ENCODE measurements at regions of chr10 and their contacts with region 1.

Region 1: DNA sequence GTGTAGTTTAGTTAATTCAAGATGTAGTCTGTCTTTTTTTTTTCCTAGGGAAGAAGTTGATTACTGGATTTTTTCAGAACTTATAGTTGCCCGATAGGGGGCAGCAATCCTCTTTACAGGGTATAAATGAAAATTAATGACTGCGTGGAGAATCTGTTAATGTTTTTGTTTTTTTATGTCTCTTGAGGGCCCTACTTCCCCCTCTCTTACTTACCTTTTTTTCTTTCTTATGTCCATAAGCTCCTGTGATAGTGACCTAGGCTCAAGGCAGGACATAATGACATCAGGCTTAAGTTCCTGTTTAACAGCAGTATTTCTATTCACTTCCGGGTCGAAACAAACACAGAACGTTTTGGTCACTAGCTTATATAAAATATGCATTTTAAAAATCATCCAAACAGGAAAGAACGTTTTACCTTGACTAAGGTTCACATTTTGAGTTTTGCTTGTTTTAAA is 18.8 kb downstream of the CDC123 start:
- DNase-seq: peak; percentile 83
- ATAC-seq: peak; percentile 24
- H3K4me3 ChIP-seq: peak overlapping the region in 4 of 5 experiments; percentile 9 to 42 (median 34)
- H3K4me3 Mint-ChIP-seq: peak overlapping the region; percentile 80
- H3K27ac ChIP-seq: peak overlapping the region; percentile 53 to 80
- H3K27ac Mint-ChIP-seq: peak overlapping the region; percentile 92
- H3K4me1 ChIP-seq: peaks cover 10 to 12% of the 10 kb centered on the region in 2 donors
- H3K4me1 Mint-ChIP-seq: peaks cover 14% of the 10 kb centered on the region
- H3K27me3 ChIP-seq: no peaks in the 10 kb centered on the region
- H3K27me3 Mint-ChIP-seq: no peaks in the 10 kb centered on the region
- CTCF ChIP-seq: peak; percentile 90

Region 2: DNA sequence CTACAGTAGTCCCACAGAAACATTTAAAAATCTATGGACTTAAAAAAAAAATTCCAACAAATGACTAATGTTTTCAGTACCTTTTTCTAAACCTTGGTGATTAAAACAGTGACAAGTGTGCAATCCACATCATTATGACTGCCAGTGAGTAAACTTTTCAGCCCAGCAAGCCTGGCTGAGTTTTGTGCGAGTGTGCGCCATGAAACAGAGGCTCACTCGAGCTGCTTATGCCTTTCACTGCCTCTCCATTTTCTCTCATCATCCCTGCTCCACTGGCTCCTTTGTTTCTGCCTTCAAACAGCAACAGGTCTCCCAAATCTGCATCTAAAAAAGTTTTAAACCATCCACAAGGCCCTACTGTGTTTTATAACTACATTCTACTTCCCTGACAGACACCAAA is 709.2 kb before region 1 on chr10:
- CTCF ChIA-PET with region 1: no interaction called
- POLR2A ChIA-PET with region 1: no interaction called
- intact Hi-C with region 1: no loop called
- DNase-seq: no peak
- ATAC-seq: no peak
- H3K4me3 ChIP-seq: no peak overlapping the region
- H3K4me3 Mint-ChIP-seq: no peak overlapping the region
- H3K27ac ChIP-seq: no peak overlapping the region
- H3K27ac Mint-ChIP-seq: peak overlapping the region; percentile 28
- H3K4me1 ChIP-seq: no peaks in the 10 kb centered on the region
- H3K4me1 Mint-ChIP-seq: peaks cover 21% of the 10 kb centered on the region
- H3K27me3 ChIP-seq: no peaks in the 10 kb centered on the region
- H3K27me3 Mint-ChIP-seq: no peaks in the 10 kb centered on the region
- CTCF ChIP-seq: no peak

Region 3: GRCh38 chr10:12195603-12196506 is 18.9 kb before region 1 on chr10 and contains the starts of genes CDC123 and NUDT5:
- CTCF ChIA-PET with region 1: interaction called, 24 read pairs
- POLR2A ChIA-PET with region 1: interaction called, 4 read pairs
- intact Hi-C with region 1: loop called (anchors 1 kb)
- DNase-seq: peak; percentile 93
- ATAC-seq: peak; percentile 90
- H3K4me3 ChIP-seq: peak within 1 kb of the TSS; percentile 87 to 97 (median 95)
- H3K4me3 Mint-ChIP-seq: peak within 1 kb of the TSS; percentile 93
- H3K27ac ChIP-seq: peak within 1 kb of the TSS; percentile 91 to 94
- H3K27ac Mint-ChIP-seq: peak within 1 kb of the TSS; percentile 99
- H3K4me1 ChIP-seq: peaks cover 18 to 24% of the 10 kb centered on the region in 2 donors
- H3K4me1 Mint-ChIP-seq: peaks cover 42% of the 10 kb centered on the region
- H3K27me3 ChIP-seq: no peaks in the 10 kb centered on the region
- H3K27me3 Mint-ChIP-seq: no peaks in the 10 kb centered on the region
- CTCF ChIP-seq: no peak
- total RNA-seq, gene CDC123: 56.0 and 62.0 TPM in 2 replicates
- total RNA-seq, gene NUDT5: 39.1 and 39.9 TPM in 2 replicates

Region 4: GRCh38 chr10:12228851-12229250 is 14.1 kb after region 1 on chr10:
- CTCF ChIA-PET with region 1: interaction called, 27 read pairs
- POLR2A ChIA-PET with region 1: no interaction called
- intact Hi-C with region 1: no loop called
- DNase-seq: no peak
- ATAC-seq: no peak
- H3K4me3 ChIP-seq: no peak overlapping the region
- H3K4me3 Mint-ChIP-seq: no peak overlapping the region
- H3K27ac ChIP-seq: no peak overlapping the region
- H3K27ac Mint-ChIP-seq: no peak overlapping the region
- H3K4me1 ChIP-seq: no peaks in the 10 kb centered on the region
- H3K4me1 Mint-ChIP-seq: no peaks in the 10 kb centered on the region
- H3K27me3 ChIP-seq: no peaks in the 10 kb centered on the region
- H3K27me3 Mint-ChIP-seq: no peaks in the 10 kb centered on the region
- CTCF ChIP-seq: no peak

Region 5: GRCh38 chr10:12241810-12242529 is 27.2 kb after region 1 on chr10:
- CTCF ChIA-PET with region 1: interaction called, 25 read pairs
- POLR2A ChIA-PET with region 1: no interaction called
- intact Hi-C with region 1: loop called (anchors 2 kb)
- DNase-seq: peak; percentile 71
- ATAC-seq: no peak
- H3K4me3 ChIP-seq: no peak overlapping the region
- H3K4me3 Mint-ChIP-seq: peak overlapping the region; percentile 77
- H3K27ac ChIP-seq: peak overlapping the region; percentile 95
- H3K27ac Mint-ChIP-seq: peak overlapping the region; percentile 99
- H3K4me1 ChIP-seq: peaks cover 58 to 62% of the 10 kb centered on the region in 2 donors
- H3K4me1 Mint-ChIP-seq: peaks cover 60% of the 10 kb centered on the region
- H3K27me3 ChIP-seq: no peaks in the 10 kb centered on the region
- H3K27me3 Mint-ChIP-seq: no peaks in the 10 kb centered on the region
- CTCF ChIP-seq: no peak

Region 6: GRCh38 chr10:12264204-12264940 is 49.6 kb after region 1 on chr10:
- CTCF ChIA-PET with region 1: interaction called, 11 read pairs
- POLR2A ChIA-PET with region 1: no interaction called
- intact Hi-C with region 1: no loop called
- DNase-seq: peak; percentile 99
- ATAC-seq: peak; percentile 89
- H3K4me3 ChIP-seq: peak overlapping the region in 4 of 5 experiments; percentile 18 to 34 (median 22)
- H3K4me3 Mint-ChIP-seq: peak overlapping the region; percentile 79
- H3K27ac ChIP-seq: peak overlapping the region; percentile 86 to 100
- H3K27ac Mint-ChIP-seq: peak overlapping the region; percentile 99
- H3K4me1 ChIP-seq: peaks cover 51 to 62% of the 10 kb centered on the region in 2 donors
- H3K4me1 Mint-ChIP-seq: peaks cover 50% of the 10 kb centered on the region
- H3K27me3 ChIP-seq: no peaks in the 10 kb centered on the region
- H3K27me3 Mint-ChIP-seq: no peaks in the 10 kb centered on the region
- CTCF ChIP-seq: peak; percentile 56

Region 7: GRCh38 chr10:12484941-12485805 is 270.4 kb after region 1 on chr10:
- CTCF ChIA-PET with region 1: interaction called, 25 read pairs
- POLR2A ChIA-PET with region 1: no interaction called
- intact Hi-C with region 1: no loop called
- DNase-seq: peak; percentile 61
- ATAC-seq: peak; percentile 72
- H3K4me3 ChIP-seq: peak overlapping the region in 4 of 5 experiments; percentile 9 to 39 (median 17)
- H3K4me3 Mint-ChIP-seq: peak overlapping the region; percentile 88
- H3K27ac ChIP-seq: peak overlapping the region; percentile 54 to 61
- H3K27ac Mint-ChIP-seq: peak overlapping the region; percentile 92
- H3K4me1 ChIP-seq: peaks cover 28 to 38% of the 10 kb centered on the region in 2 donors
- H3K4me1 Mint-ChIP-seq: peaks cover 59% of the 10 kb centered on the region
- H3K27me3 ChIP-seq: no peaks in the 10 kb centered on the region
- H3K27me3 Mint-ChIP-seq: no peaks in the 10 kb centered on the region
- CTCF ChIP-seq: peak; percentile 32

Region 8: DNA sequence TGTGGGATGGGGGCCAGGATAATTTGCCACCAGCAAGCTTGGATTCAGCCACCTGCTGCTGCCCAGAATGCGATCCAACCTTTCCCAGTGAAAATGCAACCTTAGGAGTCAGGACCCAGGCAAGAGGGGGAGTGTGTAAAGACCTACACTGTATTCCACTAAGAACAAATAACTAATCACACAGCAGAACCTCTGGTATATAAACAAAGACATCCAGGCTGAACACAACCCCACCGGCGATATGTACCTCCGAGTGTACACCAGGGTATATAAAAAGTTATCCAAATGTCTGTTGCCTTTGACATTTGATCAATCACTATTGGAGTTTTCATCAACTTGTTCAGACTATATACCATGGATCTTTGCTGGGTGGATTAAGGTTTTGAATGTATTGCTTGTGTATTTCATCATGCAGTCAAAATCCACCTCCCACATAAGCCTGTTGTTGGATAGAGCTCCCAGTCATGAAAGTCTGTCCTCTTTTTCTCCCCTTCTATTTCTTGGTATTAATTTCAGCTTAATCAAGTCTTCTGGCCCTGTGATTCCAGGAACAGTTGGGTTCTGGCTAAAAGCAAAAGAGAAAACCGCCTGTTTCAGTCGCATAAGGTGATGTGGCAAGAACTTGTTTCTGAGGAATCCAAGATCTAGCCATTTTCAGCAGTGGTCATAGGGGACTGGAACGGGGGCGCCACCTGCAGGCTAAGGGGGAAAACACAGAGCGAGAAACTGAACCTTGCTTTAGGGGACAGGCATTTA is 496.0 kb after region 1 on chr10:
- CTCF ChIA-PET with region 1: interaction called, 122 read pairs
- POLR2A ChIA-PET with region 1: no interaction called
- intact Hi-C with region 1: loop called (anchors 1 kb)
- DNase-seq: peak; percentile 81
- ATAC-seq: peak; percentile 88
- H3K4me3 ChIP-seq: no peak overlapping the region
- H3K4me3 Mint-ChIP-seq: no peak overlapping the region
- H3K27ac ChIP-seq: peak overlapping the region in 1 of 2 donors; percentile 54
- H3K27ac Mint-ChIP-seq: peak overlapping the region; percentile 59
- H3K4me1 ChIP-seq: peaks cover 0 to 3% of the 10 kb centered on the region in 2 donors
- H3K4me1 Mint-ChIP-seq: peaks cover 16% of the 10 kb centered on the region
- H3K27me3 ChIP-seq: no peaks in the 10 kb centered on the region
- H3K27me3 Mint-ChIP-seq: no peaks in the 10 kb centered on the region
- CTCF ChIP-seq: peak; percentile 98

Measured in B cell (primary cell).